ENCODE measurements at regions of chr4 and their contacts with region 1.

Region 1: GRCh38 chr4:127352220-127353113 is 280.3 kb upstream of the INTU start:
- DNase-seq: no peak
- ATAC-seq: no peak
- H3K4me3 ChIP-seq: no peak overlapping the region
- H3K27ac ChIP-seq: no peak overlapping the region
- H3K4me1 ChIP-seq: no peaks in the 10 kb centered on the region
- H3K27me3 ChIP-seq: no peaks in the 10 kb centered on the region
- CTCF ChIP-seq: no peak

Region 2: DNA sequence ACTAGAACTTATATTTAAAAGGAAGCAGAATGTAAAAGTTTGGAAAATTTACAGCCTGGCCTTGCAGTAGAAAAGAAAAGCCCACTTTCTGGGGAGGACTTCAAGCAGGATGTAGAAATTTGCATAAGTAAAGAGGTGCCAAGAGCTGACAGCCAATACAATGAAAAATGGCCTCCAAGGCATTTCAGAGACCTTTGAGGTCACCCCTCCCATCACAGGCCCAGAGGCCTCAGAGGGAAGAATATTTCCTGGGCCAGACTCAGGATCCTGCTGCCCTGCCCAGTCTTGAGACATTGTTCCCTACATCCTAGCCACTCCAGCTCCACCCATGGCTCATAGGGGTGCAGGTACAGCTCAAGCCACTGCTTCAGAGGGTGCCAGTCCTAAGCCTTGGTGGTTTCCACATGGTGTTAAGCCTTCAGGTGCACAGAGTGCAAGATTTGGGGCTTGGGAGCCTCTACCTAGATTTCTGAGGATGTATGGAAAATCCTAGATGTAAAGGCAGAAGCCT is 238.6 kb before region 1 on chr4:
- intact Hi-C with region 1: no loop called
- DNase-seq: no peak
- ATAC-seq: no peak
- H3K4me3 ChIP-seq: no peak overlapping the region
- H3K27ac ChIP-seq: no peak overlapping the region
- H3K4me1 ChIP-seq: no peaks in the 10 kb centered on the region
- H3K27me3 ChIP-seq: no peaks in the 10 kb centered on the region
- CTCF ChIP-seq: no peak

Region 3: DNA sequence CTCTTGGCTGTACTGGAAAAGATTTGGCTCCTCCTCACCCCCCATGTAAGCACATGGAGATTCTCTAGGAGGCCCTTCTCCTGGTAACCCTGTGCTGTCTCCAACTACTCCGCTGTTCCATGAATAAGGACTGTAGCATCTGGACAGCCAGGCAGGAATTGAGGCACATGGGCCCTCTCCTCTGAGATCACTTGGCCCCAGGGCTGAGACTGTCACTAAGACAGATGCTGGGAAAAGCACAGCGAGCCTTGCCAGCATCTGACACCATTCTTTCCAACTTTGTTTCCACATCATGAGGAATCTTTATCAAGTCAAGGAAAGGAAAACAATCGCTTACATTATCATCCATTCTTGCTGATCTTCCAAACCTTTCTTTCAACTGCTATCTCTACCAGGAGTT is 57.7 kb after region 1 on chr4:
- intact Hi-C with region 1: loop called (anchors 10 kb)
- DNase-seq: no peak
- ATAC-seq: peak; percentile 37
- H3K4me3 ChIP-seq: no peak overlapping the region
- H3K27ac ChIP-seq: no peak overlapping the region
- H3K4me1 ChIP-seq: no peaks in the 10 kb centered on the region
- H3K27me3 ChIP-seq: no peaks in the 10 kb centered on the region
- CTCF ChIP-seq: no peak

Region 4: GRCh38 chr4:127469959-127470809 is 117.7 kb after region 1 on chr4:
- intact Hi-C with region 1: no loop called
- DNase-seq: peak; percentile 56
- ATAC-seq: peak; percentile 31
- H3K4me3 ChIP-seq: no peak overlapping the region
- H3K27ac ChIP-seq: no peak overlapping the region
- H3K4me1 ChIP-seq: no peaks in the 10 kb centered on the region
- H3K27me3 ChIP-seq: no peaks in the 10 kb centered on the region
- CTCF ChIP-seq: no peak

Measured in upper lobe of right lung (tissue), 1 donor.